ENCODE measurements at regions of chr17 and their contacts with region 1.

Region 1: GRCh38 chr17:61065263-61065773 is 334.3 kb upstream of the TBX2 start:
- DNase-seq: no peak
- H3K4me3 ChIP-seq: no peak overlapping the region
- H3K27ac ChIP-seq: no peak overlapping the region
- H3K4me1 ChIP-seq: no peaks in the 10 kb centered on the region
- H3K27me3 ChIP-seq: no peaks in the 10 kb centered on the region
- CTCF ChIP-seq: no peak

Region 2: DNA sequence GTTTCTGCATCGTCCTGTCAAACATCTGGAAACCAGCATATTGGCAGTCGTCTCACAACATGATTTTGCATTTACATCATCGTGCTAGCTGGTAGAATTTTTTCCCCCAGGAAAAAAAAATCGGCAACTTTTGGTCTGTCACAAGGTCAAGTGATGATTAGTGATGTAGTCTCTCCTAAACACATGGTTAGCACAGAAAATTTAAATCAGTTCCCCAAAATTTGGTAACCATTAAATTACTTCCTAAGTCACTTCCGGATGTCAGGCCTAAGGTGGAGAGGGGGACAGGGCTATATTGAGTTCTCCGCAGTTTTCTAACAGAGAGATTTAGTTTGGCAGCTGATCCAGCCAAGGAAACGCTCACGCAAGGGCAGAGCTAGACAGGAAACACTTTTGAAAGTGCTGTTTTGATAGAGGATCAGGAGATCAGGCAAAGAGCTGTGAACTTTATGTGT is 63.4 kb after region 1 on chr17:
- CTCF ChIA-PET with region 1: no interaction called
- POLR2A ChIA-PET with region 1: no interaction called
- intact Hi-C with region 1: loop called (anchors 10 kb)
- DNase-seq: no peak
- H3K4me3 ChIP-seq: no peak overlapping the region
- H3K27ac ChIP-seq: no peak overlapping the region
- H3K4me1 ChIP-seq: no peaks in the 10 kb centered on the region
- H3K27me3 ChIP-seq: no peaks in the 10 kb centered on the region
- CTCF ChIP-seq: no peak

Region 3: DNA sequence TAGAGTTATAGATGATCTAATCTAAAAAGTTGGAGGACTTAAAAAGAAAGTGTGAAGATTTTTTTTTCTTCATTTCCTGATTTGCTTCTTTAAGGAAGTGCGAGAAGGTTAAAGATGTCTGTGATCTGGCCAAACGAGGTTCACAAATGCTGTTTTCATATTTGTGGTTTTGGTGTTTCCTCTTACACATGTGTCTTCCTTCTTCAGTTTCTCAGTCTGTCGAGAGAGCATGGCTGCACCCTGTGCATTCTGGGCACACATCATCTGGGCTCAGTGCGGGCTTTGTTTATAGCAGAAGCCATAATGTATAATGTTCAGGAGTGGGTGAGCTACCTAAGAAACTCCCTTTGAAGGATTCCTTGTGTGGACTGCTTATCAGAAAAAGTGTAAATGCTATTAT is 73.9 kb after region 1 on chr17:
- CTCF ChIA-PET with region 1: no interaction called
- POLR2A ChIA-PET with region 1: no interaction called
- intact Hi-C with region 1: no loop called
- DNase-seq: no peak
- H3K4me3 ChIP-seq: no peak overlapping the region
- H3K27ac ChIP-seq: no peak overlapping the region
- H3K4me1 ChIP-seq: no peaks in the 10 kb centered on the region
- H3K27me3 ChIP-seq: no peaks in the 10 kb centered on the region
- CTCF ChIP-seq: no peak

Region 4: GRCh38 chr17:61157246-61157886 is 92.0 kb after region 1 on chr17:
- CTCF ChIA-PET with region 1: no interaction called
- POLR2A ChIA-PET with region 1: no interaction called
- intact Hi-C with region 1: no loop called
- DNase-seq: peak; percentile 54
- H3K4me3 ChIP-seq: no peak overlapping the region
- H3K27ac ChIP-seq: no peak overlapping the region
- H3K4me1 ChIP-seq: peaks cover 19% of the 10 kb centered on the region
- H3K27me3 ChIP-seq: no peaks in the 10 kb centered on the region
- CTCF ChIP-seq: no peak